Sciatic nerve (tissue), 2 donors: ENCODE measurements at regions of chr6 and their contacts with region 1.

Region 1: GRCh38 chr6:158092806-158093205 is 75.3 kb downstream of the SERAC1 start:
- DNase-seq: no peak
- ATAC-seq: no peak

Region 2: GRCh38 chr6:158213925-158214674 is 121.3 kb after region 1 on chr6:
- intact Hi-C with region 1: no loop called
- DNase-seq: peak; percentile 68
- ATAC-seq: peak; percentile 91

Region 3: GRCh38 chr6:158399040-158399700 is 306.4 kb after region 1 on chr6:
- intact Hi-C with region 1: loop called (anchors 5 kb)
- DNase-seq: no peak
- ATAC-seq: no peak